Dendritic cell treated with granulocyte-macrophage colony-stimulating factor and Interleukin-4, amounts not matched to agents 40 ng/mL and 50 ng/mL, for 4 days (primary cell): ENCODE measurements at regions of chr2 and their contacts with region 1.

Region 1: GRCh38 chr2:109615603-109616583 is 1.7 kb downstream of the SOWAHC start:
- H3K4me3 Mint-ChIP-seq: peak overlapping the region; percentile 68
- H3K27ac Mint-ChIP-seq: peak overlapping the region; percentile 60
- H3K4me1 Mint-ChIP-seq: peaks cover 26% of the 10 kb centered on the region
- H3K27me3 Mint-ChIP-seq: peaks cover 53% of the 10 kb centered on the region

Region 2: GRCh38 chr2:109637749-109638570 is 22.1 kb after region 1 on chr2:
- intact Hi-C with region 1: loop called (anchors 2 kb)
- H3K4me3 Mint-ChIP-seq: peak overlapping the region; percentile 30
- H3K27ac Mint-ChIP-seq: peak overlapping the region; percentile 79
- H3K4me1 Mint-ChIP-seq: peaks cover 47% of the 10 kb centered on the region
- H3K27me3 Mint-ChIP-seq: no peaks in the 10 kb centered on the region